Left ventricle myocardium inferior (tissue), 1 donor: ENCODE measurements at regions of chr10 and their contacts with region 1.

Region 1: GRCh38 chr10:87850742-87851205 is 12.6 kb downstream of the KLLN start:
- DNase-seq: peak; percentile 45
- H3K4me3 ChIP-seq: no peak overlapping the region
- H3K27ac ChIP-seq: no peak overlapping the region
- H3K4me1 ChIP-seq: no peaks in the 10 kb centered on the region
- H3K27me3 ChIP-seq: no peaks in the 10 kb centered on the region
- CTCF ChIP-seq: peak; percentile 84

Region 2: GRCh38 chr10:88386821-88387773 is 536.3 kb after region 1 on chr10:
- intact Hi-C with region 1: loop called (anchors 5 kb)
- DNase-seq: no peak
- H3K4me3 ChIP-seq: peak overlapping the region; percentile 46
- H3K27ac ChIP-seq: peak overlapping the region; percentile 74
- H3K4me1 ChIP-seq: peaks cover 43% of the 10 kb centered on the region
- H3K27me3 ChIP-seq: no peaks in the 10 kb centered on the region
- CTCF ChIP-seq: no peak

Region 3: DNA sequence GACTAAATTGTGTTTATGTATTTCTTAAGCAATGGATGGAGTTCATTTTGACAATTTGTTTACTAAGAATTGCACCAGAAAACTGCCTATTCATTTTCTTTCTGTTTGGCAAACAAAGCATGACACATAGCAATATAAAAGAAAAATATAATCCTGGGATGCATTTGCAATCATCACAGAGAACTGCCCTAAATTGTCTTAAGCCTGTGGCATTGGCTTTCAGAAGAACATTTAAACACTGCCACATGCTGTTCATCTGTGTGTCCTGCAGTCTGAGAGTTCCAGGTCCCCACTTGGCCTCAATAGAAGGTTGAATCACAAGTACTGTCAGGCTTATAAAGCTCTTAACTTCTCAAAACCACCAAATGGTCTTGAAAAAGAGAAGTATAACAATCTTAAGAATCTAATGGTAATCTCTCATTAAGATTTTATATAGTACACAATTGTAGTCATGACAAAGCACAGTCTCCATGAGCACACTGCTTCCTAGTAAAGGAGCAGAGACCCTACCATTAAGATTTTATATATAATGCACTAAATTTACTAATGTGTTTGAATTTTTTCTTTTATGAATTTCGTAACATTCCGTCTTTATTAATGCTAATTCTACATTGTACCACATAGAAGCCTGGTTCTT is 702.5 kb after region 1 on chr10:
- intact Hi-C with region 1: loop called (anchors 5 kb)
- DNase-seq: no peak
- H3K4me3 ChIP-seq: no peak overlapping the region
- H3K27ac ChIP-seq: no peak overlapping the region
- H3K4me1 ChIP-seq: no peaks in the 10 kb centered on the region
- H3K27me3 ChIP-seq: no peaks in the 10 kb centered on the region
- CTCF ChIP-seq: peak; percentile 84